Left ventricle myocardium superior (tissue), 1 donor: ENCODE measurements at regions of chr19 and their contacts with region 1.

Region 1: DNA sequence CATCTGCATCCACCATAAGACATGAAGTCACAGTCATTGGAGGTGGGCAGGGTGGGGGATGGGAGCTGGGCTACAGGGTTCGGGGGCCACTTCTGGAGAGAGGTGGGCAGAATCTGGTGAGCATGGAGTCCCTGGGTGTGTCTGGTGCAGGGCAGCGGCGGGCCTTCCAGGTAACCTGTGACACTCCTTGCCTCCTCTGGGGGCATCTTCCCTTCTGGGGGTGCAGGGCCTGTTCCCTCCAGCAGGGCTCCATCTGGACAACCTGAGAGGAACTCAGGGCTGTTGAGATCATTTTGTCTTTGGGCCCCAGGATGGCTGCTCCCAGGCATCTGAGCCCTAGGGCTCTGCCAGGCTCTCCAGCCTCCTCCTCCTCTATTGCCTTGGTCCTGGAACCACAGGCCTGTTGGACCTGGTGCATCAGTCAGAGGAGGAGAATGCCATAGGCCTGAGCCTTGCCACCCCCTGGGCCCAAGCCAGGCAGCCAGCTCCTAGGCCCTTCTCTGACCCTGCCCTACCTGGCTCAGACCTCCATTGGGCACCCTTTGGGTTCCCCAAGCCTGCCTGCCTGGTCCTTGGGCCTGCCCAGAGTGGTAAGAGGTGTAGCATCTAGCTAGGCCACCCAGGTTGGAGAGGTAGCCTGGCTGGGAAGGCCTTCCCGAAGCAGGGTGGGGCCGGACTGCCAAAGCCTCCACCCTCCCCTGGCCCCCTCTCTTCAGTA is 13.4 kb downstream of the LYL1 start:
- DNase-seq: no peak
- ATAC-seq: no peak

Region 2: DNA sequence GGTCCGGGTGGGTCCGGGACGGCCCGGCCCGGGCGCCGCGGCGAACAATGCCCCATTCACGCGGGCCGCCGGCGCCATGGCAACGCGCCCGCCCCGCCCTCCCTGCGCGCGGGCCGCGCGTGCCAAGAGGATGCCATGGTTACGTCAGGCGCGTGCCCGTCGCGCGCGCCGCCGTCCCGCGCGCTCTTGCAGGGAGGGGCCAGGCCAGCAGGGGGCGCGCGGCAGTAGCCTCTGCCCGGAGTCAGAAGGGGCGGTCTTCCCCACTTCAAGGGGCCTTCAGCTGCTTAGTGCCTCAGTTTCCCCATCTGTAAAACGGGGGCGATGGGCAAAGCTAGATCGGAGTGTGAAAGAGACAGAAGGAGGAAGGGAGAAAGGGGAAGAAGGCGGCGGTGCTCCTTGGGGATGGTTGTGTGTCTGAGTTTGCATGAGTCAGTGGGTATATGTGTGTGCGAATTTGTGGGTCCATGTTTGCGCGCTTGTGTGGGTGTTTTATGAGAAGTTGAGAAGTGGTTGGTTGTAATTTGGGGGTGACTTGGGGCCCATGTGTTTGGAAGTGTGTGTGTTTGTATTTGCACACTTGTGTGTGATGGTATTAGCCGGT is 105.7 kb before region 1 on chr19:
- intact Hi-C with region 1: loop called (anchors 5 kb)
- DNase-seq: peak; percentile 91
- ATAC-seq: peak; percentile 80